ENCODE measurements at regions of chr5 and their contacts with region 1.

Region 1: GRCh38 chr5:149357370-149358293 is at the start of gene PCYOX1L:
- DNase-seq: peak; percentile 98
- H3K4me3 Mint-ChIP-seq: peak within 1 kb of the TSS; percentile 84
- H3K27ac Mint-ChIP-seq: peak within 1 kb of the TSS; percentile 27
- H3K4me1 Mint-ChIP-seq: no peaks in the 10 kb centered on the region
- H3K27me3 Mint-ChIP-seq: no peaks in the 10 kb centered on the region
- CTCF ChIP-seq: no peak
- total RNA-seq, gene PCYOX1L: 29.2 and 29.9 TPM in 2 replicates

Region 2: DNA sequence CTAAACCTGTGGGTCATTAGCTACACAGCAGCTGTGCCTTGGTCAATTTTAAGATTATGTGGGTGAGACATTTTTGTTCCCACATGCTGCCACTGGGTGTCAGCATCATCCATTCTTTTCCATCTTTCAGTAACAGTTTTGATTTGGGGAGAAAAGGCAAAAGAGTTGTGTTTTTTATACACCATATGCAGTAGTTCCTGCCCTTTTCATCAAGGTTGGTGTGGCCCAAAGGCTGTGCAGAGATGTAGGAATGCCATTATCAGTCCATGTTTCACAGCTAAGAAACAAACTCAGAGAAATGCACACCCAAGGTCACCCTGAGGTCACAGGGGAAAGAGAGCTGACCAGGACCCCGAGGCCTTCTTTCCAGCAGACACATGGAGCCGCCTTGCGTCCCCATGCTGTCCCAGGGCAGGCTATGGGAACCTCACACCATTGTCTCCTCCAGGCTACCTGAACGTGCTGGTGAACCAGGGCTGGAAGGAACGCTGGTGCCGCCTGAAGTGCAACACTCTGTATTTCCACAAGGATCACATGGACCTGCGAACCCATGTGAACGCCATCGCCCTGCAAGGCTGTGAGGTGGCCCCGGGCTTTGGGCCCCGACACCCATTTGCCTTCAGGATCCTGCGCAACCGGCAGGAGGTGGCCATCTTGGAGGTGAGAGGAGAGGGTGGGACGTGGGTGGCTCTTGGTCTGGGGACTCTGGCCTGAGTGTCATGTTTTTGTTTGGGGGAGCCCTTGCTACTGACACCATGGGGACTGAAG is 40.2 kb before region 1 on chr5:
- CTCF ChIA-PET with region 1: interaction called, 10 read pairs
- intact Hi-C with region 1: no loop called
- DNase-seq: peak; percentile 44
- H3K4me3 Mint-ChIP-seq: no peak overlapping the region
- H3K27ac Mint-ChIP-seq: no peak overlapping the region
- H3K4me1 Mint-ChIP-seq: peaks cover 15% of the 10 kb centered on the region
- H3K27me3 Mint-ChIP-seq: no peaks in the 10 kb centered on the region
- CTCF ChIP-seq: peak; percentile 65

Region 3: GRCh38 chr5:149345147-149345875 is 12.3 kb before region 1 on chr5 and contains the start of gene GRPEL2:
- CTCF ChIA-PET with region 1: interaction called, 23 read pairs
- intact Hi-C with region 1: no loop called
- DNase-seq: peak; percentile 97
- H3K4me3 Mint-ChIP-seq: peak within 1 kb of the TSS; percentile 96
- H3K27ac Mint-ChIP-seq: peak within 1 kb of the TSS; percentile 93
- H3K4me1 Mint-ChIP-seq: peaks cover 38% of the 10 kb centered on the region
- H3K27me3 Mint-ChIP-seq: no peaks in the 10 kb centered on the region
- CTCF ChIP-seq: no peak
- total RNA-seq, gene GRPEL2: 28.2 and 31.0 TPM in 2 replicates

Region 4: DNA sequence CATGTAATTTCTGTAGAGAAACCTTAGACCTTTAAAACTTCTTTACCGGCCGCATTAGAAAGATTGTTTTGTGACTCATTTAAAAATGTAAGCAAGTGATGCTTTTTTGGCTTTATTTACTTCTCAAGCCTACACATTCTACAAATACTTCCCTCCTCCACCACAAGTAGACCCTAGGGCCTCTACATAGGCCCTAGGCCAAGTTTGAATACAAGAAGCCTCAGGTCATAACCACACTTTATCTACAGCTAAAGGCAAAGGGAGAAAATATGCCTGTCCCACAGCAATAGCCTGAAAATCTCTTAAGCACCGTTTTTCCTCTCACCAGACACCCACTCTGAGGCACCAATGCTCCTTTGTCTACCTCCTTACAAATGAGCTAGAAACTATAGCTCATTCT is 139.7 kb after region 1 on chr5:
- CTCF ChIA-PET with region 1: no interaction called
- intact Hi-C with region 1: no loop called
- DNase-seq: no peak
- H3K4me3 Mint-ChIP-seq: no peak overlapping the region
- H3K27ac Mint-ChIP-seq: peak overlapping the region; percentile 48
- H3K4me1 Mint-ChIP-seq: peaks cover 26% of the 10 kb centered on the region
- H3K27me3 Mint-ChIP-seq: no peaks in the 10 kb centered on the region
- CTCF ChIP-seq: no peak